Mammary epithelial cell (primary cell): ENCODE measurements at regions of chrX and their contacts with region 1.

Region 1: DNA sequence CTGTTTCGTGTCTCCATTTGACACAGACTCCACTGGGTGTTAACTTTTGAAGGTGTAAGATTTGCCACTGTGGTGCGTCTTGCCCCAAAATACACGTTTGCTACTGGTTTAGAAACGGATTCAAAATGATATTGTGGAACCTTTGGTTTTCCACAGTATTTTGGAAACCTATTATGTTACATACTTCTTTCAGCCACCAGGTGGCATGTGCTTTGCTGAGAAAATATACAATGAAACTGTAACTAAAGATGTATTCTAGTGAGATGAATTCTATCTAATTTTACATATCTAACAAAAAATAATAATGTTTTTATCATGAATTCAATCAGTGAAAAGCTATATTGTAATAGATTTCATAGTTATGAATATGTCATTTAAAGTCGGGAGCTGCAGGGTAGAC is 28.4 kb upstream of the SLITRK4 start:
- DNase-seq: no peak
- H3K4me3 ChIP-seq: no peak overlapping the region
- H3K27ac ChIP-seq: no peak overlapping the region
- H3K4me1 ChIP-seq: no peaks in the 10 kb centered on the region
- H3K27me3 ChIP-seq: no peaks in the 10 kb centered on the region
- CTCF ChIP-seq: peak; percentile 67 to 68

Region 2: DNA sequence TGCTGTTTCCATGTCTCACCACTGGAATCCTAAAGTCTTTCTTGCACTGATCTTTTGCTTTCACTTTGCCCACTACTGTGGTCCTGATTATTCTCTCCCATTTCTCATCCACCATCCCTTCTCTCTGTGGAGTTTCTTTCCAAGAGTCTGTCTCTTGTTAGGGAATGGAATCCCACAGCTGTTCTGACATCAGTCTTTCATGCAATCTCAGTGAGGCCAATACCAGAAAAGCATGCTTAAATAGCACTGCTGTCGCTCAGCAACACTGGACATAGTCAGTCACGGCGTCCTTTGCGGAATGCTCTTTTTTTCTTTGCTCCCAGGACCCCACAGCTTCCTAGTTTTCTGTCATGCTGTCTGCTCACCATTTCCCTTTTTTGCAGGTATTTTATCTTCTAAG is 48.5 kb before region 1 on chrX:
- CTCF ChIA-PET with region 1: no interaction called
- dilution Hi-C with region 1: no loop called
- in situ Hi-C with region 1: no loop called
- intact Hi-C with region 1: no loop called
- DNase-seq: no peak
- H3K4me3 ChIP-seq: no peak overlapping the region
- H3K27ac ChIP-seq: no peak overlapping the region
- H3K4me1 ChIP-seq: no peaks in the 10 kb centered on the region
- H3K27me3 ChIP-seq: no peaks in the 10 kb centered on the region
- CTCF ChIP-seq: no peak

Region 3: GRCh38 chrX:143633461-143634308 is 30.6 kb before region 1 on chrX:
- CTCF ChIA-PET with region 1: no interaction called
- dilution Hi-C with region 1: no loop called
- in situ Hi-C with region 1: no loop called
- intact Hi-C with region 1: no loop called
- DNase-seq: no peak
- H3K4me3 ChIP-seq: no peak overlapping the region
- H3K27ac ChIP-seq: no peak overlapping the region
- H3K4me1 ChIP-seq: no peaks in the 10 kb centered on the region
- H3K27me3 ChIP-seq: peaks cover 2% of the 10 kb centered on the region
- CTCF ChIP-seq: no peak

Region 4: GRCh38 chrX:143788265-143788664 is 124.0 kb after region 1 on chrX:
- CTCF ChIA-PET with region 1: no interaction called
- dilution Hi-C with region 1: no loop called
- in situ Hi-C with region 1: no loop called
- intact Hi-C with region 1: loop called (anchors 10 kb)
- DNase-seq: peak; percentile 21
- H3K4me3 ChIP-seq: no peak overlapping the region
- H3K27ac ChIP-seq: no peak overlapping the region
- H3K4me1 ChIP-seq: no peaks in the 10 kb centered on the region
- H3K27me3 ChIP-seq: no peaks in the 10 kb centered on the region
- CTCF ChIP-seq: peak; percentile 65 to 71

Region 5: GRCh38 chrX:145190801-145191389 is 1526.6 kb after region 1 on chrX:
- CTCF ChIA-PET with region 1: no interaction called
- dilution Hi-C with region 1: no loop called
- in situ Hi-C with region 1: loop called in 1 of 2 experiments (anchors 10 kb)
- intact Hi-C with region 1: loop called (anchors 2 kb)
- DNase-seq: peak; percentile 12
- H3K4me3 ChIP-seq: no peak overlapping the region
- H3K27ac ChIP-seq: no peak overlapping the region
- H3K4me1 ChIP-seq: no peaks in the 10 kb centered on the region
- H3K27me3 ChIP-seq: no peaks in the 10 kb centered on the region
- CTCF ChIP-seq: peak; percentile 19 to 55